Heart right ventricle (tissue), 16 donors: ENCODE measurements at regions of chr11 and their contacts with region 1.

Region 1: DNA sequence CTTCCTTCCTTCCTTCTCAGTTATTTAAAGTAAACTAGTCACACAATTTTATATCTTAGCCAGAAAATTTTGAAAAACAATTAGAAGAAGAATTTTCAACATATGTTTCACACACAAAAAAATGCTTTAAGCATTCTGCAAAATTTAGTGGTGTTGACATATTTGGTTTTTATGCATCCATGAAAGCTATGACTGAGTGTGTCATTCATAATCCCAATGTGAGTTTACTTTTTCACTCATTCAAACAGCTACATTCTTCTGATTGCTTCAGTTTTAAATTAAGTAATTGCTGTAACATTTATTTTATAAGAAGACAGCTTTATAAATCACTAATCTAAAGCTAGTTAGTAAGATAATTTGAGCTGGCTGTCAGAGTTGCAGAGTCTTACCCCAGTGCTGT is 453.5 kb downstream of the LRRC4C start:
- DNase-seq: no peak
- ATAC-seq: no peak
- H3K4me3 ChIP-seq: no peak overlapping the region
- H3K27ac ChIP-seq: no peak overlapping the region
- H3K4me1 ChIP-seq: no peaks in the 10 kb centered on the region
- H3K27me3 ChIP-seq: no peaks in the 10 kb centered on the region
- CTCF ChIP-seq: no peak

Region 2: GRCh38 chr11:40877256-40877655 is 128.7 kb before region 1 on chr11:
- intact Hi-C with region 1: loop called in 1 of 10 experiments (anchors 5 kb)
- DNase-seq: no peak
- ATAC-seq: no peak
- H3K4me3 ChIP-seq: no peak overlapping the region
- H3K27ac ChIP-seq: no peak overlapping the region
- H3K4me1 ChIP-seq: no peaks in the 10 kb centered on the region
- H3K27me3 ChIP-seq: no peaks in the 10 kb centered on the region
- CTCF ChIP-seq: no peak

Region 3: DNA sequence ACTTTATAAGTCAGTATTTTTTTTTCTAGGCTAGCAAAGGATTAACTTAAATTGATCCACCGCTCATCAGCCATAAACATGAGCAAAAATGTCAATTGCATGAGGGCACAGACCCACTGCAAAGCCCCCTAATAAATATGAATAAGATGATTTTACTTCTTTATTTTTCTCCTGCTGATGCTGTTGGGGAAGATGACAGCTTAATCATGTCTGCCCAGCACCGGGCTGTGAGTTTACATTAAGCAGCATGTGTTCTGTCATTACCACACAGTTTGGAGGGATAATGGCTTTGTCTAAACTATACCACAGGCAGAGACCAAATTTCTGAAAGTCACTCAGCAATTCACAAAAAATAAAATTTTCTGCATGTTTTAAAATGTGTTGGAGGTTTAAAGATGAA is 107.2 kb after region 1 on chr11:
- intact Hi-C with region 1: no loop called
- DNase-seq: no peak
- ATAC-seq: no peak
- H3K4me3 ChIP-seq: no peak overlapping the region
- H3K27ac ChIP-seq: no peak overlapping the region
- H3K4me1 ChIP-seq: no peaks in the 10 kb centered on the region
- H3K27me3 ChIP-seq: no peaks in the 10 kb centered on the region
- CTCF ChIP-seq: no peak